Psoas muscle (tissue), 8 donors: ENCODE measurements at regions of chr17 and their contacts with region 1.

Region 1: GRCh38 chr17:42773290-42774035 is at the start of gene VPS25:
- DNase-seq: peak; percentile 76 to 86
- ATAC-seq: peak; percentile 87 to 99 (median 96)
- H3K4me3 ChIP-seq: peak within 1 kb of the TSS; percentile 72
- H3K27ac ChIP-seq: peak within 1 kb of the TSS; percentile 73
- H3K4me1 ChIP-seq: peaks cover 15% of the 10 kb centered on the region
- H3K27me3 ChIP-seq: no peaks in the 10 kb centered on the region
- CTCF ChIP-seq: no peak
- total RNA-seq, gene VPS25: 38.6 to 45.2 (median 39.8) TPM

Region 2: GRCh38 chr17:42819944-42820535 is 46.6 kb after region 1 on chr17:
- intact Hi-C with region 1: loop called in 1 of 2 experiments (anchors 5 kb)
- DNase-seq: peak; percentile 66 to 80
- ATAC-seq: no peak
- H3K4me3 ChIP-seq: no peak overlapping the region
- H3K27ac ChIP-seq: no peak overlapping the region
- H3K4me1 ChIP-seq: peaks cover 12% of the 10 kb centered on the region
- H3K27me3 ChIP-seq: no peaks in the 10 kb centered on the region
- CTCF ChIP-seq: peak; percentile 54

Region 3: DNA sequence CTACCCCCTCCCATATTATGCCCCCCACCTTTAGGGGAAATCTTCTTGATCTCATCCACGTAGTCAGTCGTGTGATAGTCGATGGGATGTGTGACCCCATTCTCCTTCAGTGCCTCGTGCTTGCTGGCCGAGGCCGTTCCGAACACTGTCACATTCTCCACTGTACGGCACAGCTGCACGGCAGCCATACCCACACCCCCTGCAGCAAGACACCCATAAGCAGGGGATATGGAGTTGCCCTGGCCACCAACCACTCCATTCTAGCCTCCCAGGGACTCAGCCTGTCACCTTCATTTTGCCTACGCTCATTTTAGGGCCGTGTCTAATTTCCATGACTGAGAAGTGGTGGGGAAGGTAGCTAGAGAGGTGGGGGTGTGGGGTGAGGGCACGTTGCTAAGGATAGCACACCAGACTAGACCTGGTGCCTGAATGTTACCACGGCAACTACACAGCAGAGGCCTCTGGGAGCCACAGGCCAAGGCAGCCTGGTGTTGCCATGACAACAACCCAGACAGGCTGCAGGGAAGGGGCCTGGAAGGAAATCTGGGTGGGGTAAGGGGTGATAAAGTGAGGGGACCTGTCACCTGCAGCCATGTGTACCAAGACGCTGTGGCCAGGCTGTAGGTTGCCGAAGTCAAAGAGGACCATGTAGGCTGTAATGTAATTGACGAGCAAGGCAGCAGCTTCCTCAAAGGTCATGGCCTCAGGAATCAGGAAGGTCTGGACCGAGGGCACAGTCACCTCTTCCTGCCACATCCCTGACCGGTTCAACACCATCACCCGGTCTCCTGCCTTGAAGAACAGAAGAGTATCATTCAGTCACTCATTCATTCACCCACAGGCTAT is 244.8 kb after region 1 on chr17:
- intact Hi-C with region 1: no loop called
- DNase-seq: no peak
- ATAC-seq: no peak
- H3K4me3 ChIP-seq: no peak overlapping the region
- H3K27ac ChIP-seq: no peak overlapping the region
- H3K4me1 ChIP-seq: peaks cover 15% of the 10 kb centered on the region
- H3K27me3 ChIP-seq: no peaks in the 10 kb centered on the region
- CTCF ChIP-seq: no peak